WTC11 (cell line): ENCODE measurements at regions of chr2 and their contacts with region 1.

Region 1: DNA sequence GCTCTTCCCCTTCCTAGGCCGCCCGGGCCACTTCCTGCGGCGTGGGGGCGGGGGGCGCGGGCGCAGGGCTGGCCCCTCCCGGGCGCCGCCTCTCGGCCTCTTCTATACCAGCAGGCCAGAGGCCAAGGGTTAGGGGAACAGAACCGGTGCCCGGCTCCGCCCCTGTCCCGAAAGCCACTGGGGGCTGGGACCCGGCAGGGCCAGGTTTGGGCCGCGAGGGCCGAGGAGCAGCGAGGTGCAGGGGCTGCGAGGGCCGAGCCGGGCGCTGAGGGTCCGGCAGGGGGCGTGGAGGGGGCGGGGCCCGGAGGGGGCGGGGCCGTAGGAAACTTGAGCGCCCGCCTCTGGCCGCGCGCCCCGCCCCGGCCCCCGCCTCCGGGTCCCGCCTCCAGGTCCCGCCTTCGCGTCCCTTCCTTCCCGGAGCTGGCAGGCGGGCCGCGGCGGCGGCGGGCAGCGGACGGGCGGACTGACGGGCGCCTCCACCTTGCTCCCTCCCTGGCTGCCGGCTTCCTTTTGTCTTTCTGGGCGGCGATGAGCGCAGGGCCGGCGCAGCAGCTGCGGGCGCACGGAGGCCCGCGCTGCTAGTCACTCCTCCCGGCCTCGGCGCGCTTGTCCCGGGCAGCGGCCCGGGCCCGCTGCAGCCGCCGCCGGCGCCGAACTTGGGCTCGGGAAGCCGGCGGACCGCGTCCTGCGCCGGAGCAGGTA is at the start of gene HPCAL1:
- DNase-seq: peak; percentile 97
- ATAC-seq: peak; percentile 97
- H3K4me3 Mint-ChIP-seq: peak within 1 kb of the TSS; percentile 84
- H3K27ac Mint-ChIP-seq: 0 out of 2 replicates have a peak within 1 kb of the TSS, but pooled peaks have one; percentile 42
- H3K4me1 Mint-ChIP-seq: peaks cover 24% of the 10 kb centered on the region
- H3K27me3 Mint-ChIP-seq: peaks cover 52% of the 10 kb centered on the region
- CTCF ChIP-seq: peak; percentile 31
- total RNA-seq, gene HPCAL1: 10.5 to 12.4 TPM (median 11.8 TPM) in 3 replicates

Region 2: DNA sequence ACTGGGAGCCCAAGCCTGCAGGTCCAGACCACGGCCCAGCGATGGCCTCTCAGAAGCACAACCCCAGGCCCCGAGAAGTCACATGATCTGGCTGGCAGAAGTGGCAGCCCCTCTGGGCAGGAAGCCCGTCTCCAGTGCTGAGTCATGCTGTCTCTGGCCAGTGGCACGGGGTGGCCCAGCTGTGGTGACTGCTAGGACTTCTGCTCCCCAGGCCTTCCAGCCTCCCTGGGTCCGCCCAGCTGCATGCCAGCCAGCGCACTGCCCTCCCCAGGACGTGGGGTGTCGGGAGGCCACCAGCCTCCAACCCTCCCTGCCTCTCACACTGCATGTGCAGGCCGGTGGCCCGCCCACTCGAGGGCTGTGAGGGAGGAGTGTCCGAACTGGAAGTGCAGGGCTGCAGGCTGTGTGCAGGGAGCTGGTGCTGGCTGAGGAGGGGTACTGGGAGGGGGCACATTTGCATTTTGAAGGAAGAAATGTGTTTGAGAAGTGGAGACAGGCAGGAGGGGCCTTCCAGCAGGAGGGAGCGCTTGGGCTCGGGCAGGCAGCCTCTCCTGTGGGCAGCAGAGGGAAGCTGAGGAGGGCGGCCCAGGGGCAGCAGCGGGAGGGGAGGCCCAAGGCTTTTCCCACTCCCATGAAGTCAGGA is 17.0 kb before region 1 on chr2:
- CTCF ChIA-PET with region 1: interaction called, 21 read pairs
- POLR2A ChIA-PET with region 1: interaction called, 6 read pairs
- DNase-seq: no peak
- ATAC-seq: peak; percentile 59
- H3K4me3 Mint-ChIP-seq: no peak overlapping the region
- H3K27ac Mint-ChIP-seq: no peak overlapping the region
- H3K4me1 Mint-ChIP-seq: peaks cover 8% of the 10 kb centered on the region
- H3K27me3 Mint-ChIP-seq: peaks cover 3% of the 10 kb centered on the region; the same call in 1 of the 2 replicates
- CTCF ChIP-seq: no peak

Region 3: GRCh38 chr2:10316336-10316735 is 13.7 kb after region 1 on chr2:
- CTCF ChIA-PET with region 1: interaction called, 27 read pairs
- POLR2A ChIA-PET with region 1: no interaction called
- DNase-seq: no peak
- ATAC-seq: no peak
- H3K4me3 Mint-ChIP-seq: no peak overlapping the region
- H3K27ac Mint-ChIP-seq: peak overlapping the region; percentile 89
- H3K4me1 Mint-ChIP-seq: peaks cover 15% of the 10 kb centered on the region
- H3K27me3 Mint-ChIP-seq: no peaks in the 10 kb centered on the region
- CTCF ChIP-seq: no peak

Region 4: DNA sequence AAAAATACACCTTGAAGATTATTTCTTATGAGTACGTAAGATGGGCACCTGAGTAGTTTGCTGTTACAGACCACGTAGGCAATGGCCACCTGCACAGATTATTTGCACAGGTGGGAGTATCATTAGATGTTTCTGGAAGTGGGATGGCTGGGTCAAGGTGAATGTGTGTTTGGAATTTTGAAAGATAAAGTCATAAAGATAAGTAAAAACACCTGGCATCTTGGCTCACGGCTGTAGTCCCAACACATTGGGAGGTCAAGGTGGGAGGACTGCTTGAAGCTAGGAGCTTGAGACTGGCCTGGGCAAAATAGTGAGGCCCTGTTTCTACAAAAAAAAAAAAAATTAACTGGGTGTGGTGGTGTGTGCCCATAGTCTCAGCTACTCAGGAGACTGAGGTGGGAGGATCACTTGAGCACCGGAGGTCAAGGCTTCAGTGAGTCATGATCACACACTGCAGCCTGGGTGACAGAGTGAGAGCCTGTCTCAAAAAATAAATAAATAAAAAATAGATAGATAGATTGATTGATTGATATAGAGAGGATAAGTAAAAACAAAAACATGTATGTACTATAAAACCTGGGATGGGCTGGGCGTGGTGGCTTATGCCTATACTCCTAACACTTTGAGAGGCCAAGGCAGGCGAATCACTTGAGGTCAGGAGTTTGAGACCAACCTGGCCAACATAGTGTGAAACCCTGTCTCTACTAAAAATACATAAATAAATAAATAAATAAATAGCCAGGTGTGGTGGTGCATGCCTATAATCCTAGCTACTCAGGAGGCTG is 115.1 kb after region 1 on chr2:
- CTCF ChIA-PET with region 1: no interaction called
- POLR2A ChIA-PET with region 1: no interaction called
- DNase-seq: no peak
- ATAC-seq: no peak
- H3K4me3 Mint-ChIP-seq: no peak overlapping the region
- H3K27ac Mint-ChIP-seq: no peak overlapping the region
- H3K4me1 Mint-ChIP-seq: no peaks in the 10 kb centered on the region
- H3K27me3 Mint-ChIP-seq: no peaks in the 10 kb centered on the region
- CTCF ChIP-seq: no peak